ENCODE measurements at regions of chr1 and their contacts with region 1.

Region 1: GRCh38 chr1:212749821-212750535 is 41.6 kb downstream of the NSL1 start:
- ATAC-seq: peak in 4 of 8 experiments; percentile 66 to 70 (median 69)
- H3K4me3 ChIP-seq: no peak overlapping the region
- H3K27ac ChIP-seq: no peak overlapping the region
- H3K4me1 ChIP-seq: peaks cover 0 to 2% of the 10 kb centered on the region in 2 donors

Region 2: GRCh38 chr1:212827824-212828278 is 77.9 kb after region 1 on chr1:
- in situ Hi-C with region 1: loop called in 1 of 9 experiments (anchors 25 kb)
- ATAC-seq: no peak
- H3K4me3 ChIP-seq: no peak overlapping the region
- H3K27ac ChIP-seq: no peak overlapping the region
- H3K4me1 ChIP-seq: no peaks in the 10 kb centered on the region

Region 3: GRCh38 chr1:213327017-213327667 is 577.2 kb after region 1 on chr1:
- in situ Hi-C with region 1: no loop called
- ATAC-seq: peak in 2 of 8 experiments; percentile 59 to 74
- H3K4me3 ChIP-seq: no peak overlapping the region
- H3K27ac ChIP-seq: no peak overlapping the region
- H3K4me1 ChIP-seq: peaks cover 12 to 15% of the 10 kb centered on the region in 2 donors

Measured in motor neuron (in vitro differentiated cells).